Right ventricle myocardium superior (tissue), 1 donor: ENCODE measurements at regions of chr12 and their contacts with region 1.

Region 1: GRCh38 chr12:100733817-100734593 is 60.6 kb upstream of the ANO4 start:
- DNase-seq: no peak
- ATAC-seq: no peak

Region 2: GRCh38 chr12:100234598-100235304 is 499.3 kb before region 1 on chr12:
- intact Hi-C with region 1: loop called (anchors 5 kb)
- DNase-seq: no peak
- ATAC-seq: peak; percentile 61

Region 3: GRCh38 chr12:100348657-100349454 is 385.1 kb before region 1 on chr12:
- intact Hi-C with region 1: loop called (anchors 10 kb)
- DNase-seq: no peak
- ATAC-seq: no peak

Region 4: DNA sequence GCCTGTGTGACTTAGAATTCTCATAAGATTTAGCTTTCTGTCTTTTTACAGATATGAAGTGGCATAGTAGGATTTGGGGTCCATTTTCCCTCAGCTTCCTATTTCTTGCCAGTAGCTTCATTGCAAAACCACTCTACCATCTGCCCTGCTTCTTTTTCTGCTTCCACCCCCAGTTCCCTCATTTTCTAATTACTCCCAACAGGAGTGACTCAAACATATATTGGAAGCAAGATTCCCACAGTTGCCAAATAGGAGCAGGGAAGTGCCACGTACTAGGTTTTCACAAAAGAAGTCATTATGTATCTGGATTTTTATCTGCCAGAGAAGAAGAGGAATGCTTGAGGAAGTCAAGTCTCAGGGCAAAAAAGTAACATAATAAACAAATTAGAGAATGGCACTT is 124.7 kb after region 1 on chr12:
- intact Hi-C with region 1: no loop called
- DNase-seq: no peak
- ATAC-seq: no peak